GM13976 (cell line): ENCODE measurements at regions of chr12 and their contacts with region 1.

Region 1: GRCh38 chr12:45728630-45729232 is 775 bp upstream of the ARID2 start:
- DNase-seq: peak; percentile 83
- CTCF ChIP-seq: peak; percentile 99

Region 2: DNA sequence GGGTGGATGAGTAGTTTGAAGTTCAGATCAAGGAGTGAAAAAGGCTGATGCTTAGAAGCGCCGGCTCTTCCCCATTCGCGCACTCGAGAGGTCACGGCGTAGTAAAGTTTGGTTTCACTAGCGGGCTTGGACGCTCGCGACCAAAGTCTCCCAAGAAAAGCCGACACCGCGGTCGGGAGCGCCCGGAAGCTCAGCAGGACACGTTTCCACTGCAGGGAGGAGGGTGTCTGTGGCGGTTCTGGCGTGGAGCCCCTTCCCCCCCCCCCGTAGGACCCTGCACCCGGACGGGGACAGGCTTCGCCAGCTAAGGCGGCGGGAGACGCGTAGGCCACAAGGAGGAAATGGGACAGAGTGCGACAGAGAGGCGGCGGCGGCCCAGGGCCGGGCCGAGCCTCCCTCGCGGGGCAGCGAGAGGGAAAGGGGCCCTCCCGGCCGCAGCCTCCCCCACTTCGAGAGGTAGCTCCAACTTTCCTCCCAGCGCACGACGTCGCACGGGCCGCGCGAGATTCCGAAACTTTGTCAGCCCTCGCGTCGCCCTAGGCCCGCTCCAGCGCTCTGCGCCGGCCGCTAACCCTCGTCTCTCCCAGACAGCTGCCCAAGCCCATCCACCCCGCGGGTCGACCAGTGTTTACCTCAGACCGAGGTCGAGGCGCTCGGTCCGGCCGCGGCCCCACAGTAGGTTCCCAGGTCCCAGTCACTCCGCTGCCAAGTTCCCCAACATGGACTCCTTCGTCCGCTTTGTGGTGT is 261.2 kb after region 1 on chr12:
- in situ Hi-C with region 1: loop called (anchors 10 kb)
- DNase-seq: peak; percentile 47
- CTCF ChIP-seq: no peak

Region 3: GRCh38 chr12:46024099-46024498 is 295.4 kb after region 1 on chr12:
- in situ Hi-C with region 1: no loop called
- DNase-seq: no peak
- CTCF ChIP-seq: no peak

Region 4: GRCh38 chr12:46268590-46269558 is 540.1 kb after region 1 on chr12 and contains the start of gene SLC38A1:
- in situ Hi-C with region 1: loop called (anchors 25 kb)
- DNase-seq: peak; percentile 87
- CTCF ChIP-seq: peak; percentile 6

Region 5: DNA sequence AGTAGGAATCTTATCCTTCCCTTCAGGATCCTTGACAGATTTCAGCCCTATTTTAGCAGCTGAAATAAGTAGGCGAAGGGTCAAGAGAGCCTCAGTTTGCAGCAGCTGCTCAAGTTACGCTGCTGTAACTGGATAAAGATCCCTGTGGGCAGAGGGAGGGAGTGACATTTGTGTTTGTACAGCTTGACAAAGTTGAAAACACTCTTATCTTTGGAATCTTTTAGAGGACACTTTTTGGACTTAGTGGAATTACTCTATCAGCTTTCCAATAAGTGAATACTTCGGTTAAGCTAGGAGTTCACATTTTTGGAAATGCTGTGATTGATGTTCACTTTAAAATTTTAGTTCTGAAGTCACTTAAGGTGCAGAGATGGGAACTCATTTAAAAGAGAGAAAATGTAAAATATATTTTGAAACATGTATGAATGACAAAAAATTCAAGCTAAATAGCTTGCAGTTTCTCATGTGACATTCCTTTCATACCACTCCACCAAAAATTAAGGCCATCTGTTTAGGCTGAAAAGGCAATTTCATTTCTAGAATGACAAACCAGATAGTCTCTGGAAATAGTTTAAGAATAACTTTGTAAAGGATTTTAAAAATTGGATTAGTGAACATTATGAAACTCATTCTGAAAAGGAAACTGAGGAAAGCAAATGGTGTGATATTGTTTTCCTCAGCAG is 1041.9 kb after region 1 on chr12:
- in situ Hi-C with region 1: no loop called
- DNase-seq: no peak
- CTCF ChIP-seq: no peak